ENCODE measurements at regions of chr11 and their contacts with region 1.

Region 1: GRCh38 chr11:78416305-78417178 is 1.1 kb downstream of the GAB2 start:
- DNase-seq: peak; percentile 66 to 94 (median 84)

Region 2: DNA sequence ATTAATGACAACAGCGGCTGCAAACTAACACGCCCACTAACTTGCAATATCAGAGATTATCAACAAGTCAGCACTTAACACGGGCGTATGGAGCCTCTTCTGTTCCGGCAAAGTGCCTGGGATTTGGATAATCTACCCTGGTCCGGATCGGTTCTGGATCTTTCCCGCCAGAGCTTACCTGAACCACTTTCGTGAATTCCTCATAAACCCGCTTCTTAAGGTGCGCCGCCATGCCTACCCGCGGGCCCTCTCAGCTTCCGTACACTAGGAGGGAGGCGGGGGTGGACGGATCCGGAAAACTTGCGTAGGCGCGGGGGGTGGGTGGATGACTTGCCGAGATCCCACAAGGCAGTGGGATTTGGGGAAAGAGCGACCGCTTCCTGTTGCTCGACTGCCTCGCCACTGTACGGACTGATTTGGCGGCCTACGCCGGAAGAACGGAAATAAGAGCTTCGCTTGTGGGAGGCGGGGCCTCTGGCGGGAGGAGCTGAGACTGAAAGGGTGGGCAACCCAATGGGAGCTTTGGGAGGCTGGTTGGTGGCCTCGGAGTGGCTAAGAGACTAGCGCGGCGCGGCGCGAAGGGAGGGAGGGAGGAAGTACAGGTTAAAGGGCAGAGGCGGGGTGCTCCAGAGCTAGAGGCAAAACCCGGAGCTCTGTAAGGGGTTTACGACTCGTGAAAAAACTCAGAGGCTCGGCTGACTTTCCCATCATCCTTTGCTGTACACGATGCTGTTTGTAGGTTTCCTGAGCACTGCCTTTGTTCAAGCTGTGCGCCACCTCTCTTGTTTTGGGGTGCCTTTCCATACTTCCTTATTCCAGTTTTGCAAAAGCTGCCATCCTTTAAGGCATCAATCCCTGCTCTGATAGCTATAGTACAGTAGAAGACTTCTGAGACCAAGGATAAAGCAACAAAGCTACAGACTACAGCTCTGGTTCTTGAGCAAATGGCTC is 421.9 kb before region 1 on chr11 and contains the start of gene INTS4:
- intact Hi-C with region 1: loop called (anchors 10 kb)
- DNase-seq: peak; percentile 95 to 100 (median 100)

Region 3: DNA sequence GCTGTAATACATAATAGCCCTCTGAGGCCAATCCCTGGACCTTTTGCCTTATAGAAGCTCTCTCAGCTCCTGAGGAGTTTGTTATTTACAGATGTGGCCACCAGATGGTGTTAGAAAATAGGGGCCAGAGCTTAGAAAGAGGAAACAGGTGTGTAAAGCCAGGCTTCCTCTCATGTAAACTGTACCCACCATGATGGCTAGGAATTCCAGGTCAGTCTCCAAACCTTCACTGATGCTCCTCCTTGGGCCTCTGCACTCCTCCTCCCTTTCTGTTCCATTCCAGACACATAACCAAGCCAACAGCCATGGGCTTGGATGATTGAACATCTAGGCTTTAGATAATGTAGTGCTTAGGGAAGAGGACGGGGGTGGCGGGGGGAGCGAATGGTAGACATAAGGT is 188.1 kb before region 1 on chr11:
- intact Hi-C with region 1: loop called (anchors 5 kb)
- DNase-seq: peak in 18 of 42 donors; percentile 19 to 79 (median 48)

Region 4: GRCh38 chr11:78332174-78332866 is 84.2 kb before region 1 on chr11:
- intact Hi-C with region 1: loop called (anchors 5 kb)
- DNase-seq: no peak

Region 5: GRCh38 chr11:78379039-78379670 is 37.4 kb before region 1 on chr11:
- intact Hi-C with region 1: no loop called
- DNase-seq: no peak

Region 6: GRCh38 chr11:78574386-78575381 is 158.1 kb after region 1 on chr11 and contains the start of gene NARS2:
- intact Hi-C with region 1: loop called (anchors 10 kb)
- DNase-seq: peak; percentile 93 to 99 (median 97)